ENCODE measurements at regions of chr6 and their contacts with region 1.

Region 1: DNA sequence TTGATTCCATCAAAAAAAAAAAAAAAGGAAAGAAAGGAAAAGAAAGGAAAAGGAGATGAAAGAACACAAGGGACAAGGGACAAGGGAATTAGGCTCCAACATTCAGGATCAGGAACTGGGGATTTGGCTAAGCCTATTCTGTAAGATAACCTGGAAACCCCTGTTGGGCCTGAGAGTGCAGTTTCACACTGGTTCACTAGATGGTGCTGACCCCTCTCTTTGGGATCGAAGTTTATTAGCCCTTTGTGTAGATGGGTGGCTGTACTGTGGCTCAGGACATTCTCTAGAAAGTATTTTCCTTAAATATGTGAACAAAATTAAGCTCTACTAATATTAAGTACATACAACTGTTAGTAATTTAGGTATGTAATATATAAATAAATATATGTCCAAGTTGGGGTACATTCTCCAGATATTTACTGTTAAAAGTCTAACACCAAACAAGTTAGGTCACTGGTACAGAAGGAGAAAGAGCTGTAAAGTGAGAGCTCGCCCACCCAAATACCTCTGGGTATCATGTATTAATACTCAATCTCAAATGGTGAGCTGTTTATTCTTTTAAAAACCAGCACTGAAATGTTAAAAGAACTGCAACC is 6.3 kb downstream of the OR2A4 start:
- DNase-seq: peak; percentile 33
- H3K4me3 Mint-ChIP-seq: no peak overlapping the region
- H3K27ac Mint-ChIP-seq: no peak overlapping the region
- H3K4me1 Mint-ChIP-seq: no peaks in the 10 kb centered on the region
- H3K27me3 Mint-ChIP-seq: no peaks in the 10 kb centered on the region

Region 2: DNA sequence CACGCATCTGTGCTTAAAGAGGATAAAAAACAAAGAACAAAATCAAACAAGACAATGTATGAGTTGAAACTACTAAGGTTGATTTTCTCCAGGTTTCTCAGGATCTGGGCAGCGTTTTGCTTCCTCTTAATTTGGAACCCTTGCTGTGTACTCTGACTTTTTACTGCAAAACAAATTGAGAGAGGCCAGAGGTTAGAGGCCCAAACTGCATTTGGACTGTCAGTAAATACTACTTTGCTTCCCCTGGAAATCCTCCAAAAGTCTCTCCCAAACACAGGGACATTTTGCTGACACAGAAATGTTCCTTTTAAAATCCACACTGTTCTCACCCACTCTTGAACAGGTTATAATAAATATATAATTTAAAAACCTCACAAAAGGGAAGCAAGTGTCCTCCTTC is 120.8 kb before region 1 on chr6:
- CTCF ChIA-PET with region 1: no interaction called
- POLR2A ChIA-PET with region 1: no interaction called
- DNase-seq: no peak
- H3K4me3 Mint-ChIP-seq: no peak overlapping the region
- H3K27ac Mint-ChIP-seq: no peak overlapping the region
- H3K4me1 Mint-ChIP-seq: no peaks in the 10 kb centered on the region
- H3K27me3 Mint-ChIP-seq: no peaks in the 10 kb centered on the region

Region 3: GRCh38 chr6:131831392-131831791 is 136.5 kb after region 1 on chr6:
- CTCF ChIA-PET with region 1: no interaction called
- POLR2A ChIA-PET with region 1: no interaction called
- DNase-seq: no peak
- H3K4me3 Mint-ChIP-seq: no peak overlapping the region
- H3K27ac Mint-ChIP-seq: no peak overlapping the region
- H3K4me1 Mint-ChIP-seq: no peaks in the 10 kb centered on the region
- H3K27me3 Mint-ChIP-seq: peaks cover 9% of the 10 kb centered on the region

Region 4: GRCh38 chr6:131909408-131910218 is 214.7 kb after region 1 on chr6:
- CTCF ChIA-PET with region 1: interaction called, 17 read pairs
- POLR2A ChIA-PET with region 1: no interaction called
- DNase-seq: peak; percentile 77
- H3K4me3 Mint-ChIP-seq: no peak overlapping the region
- H3K27ac Mint-ChIP-seq: no peak overlapping the region
- H3K4me1 Mint-ChIP-seq: peaks cover 13% of the 10 kb centered on the region
- H3K27me3 Mint-ChIP-seq: peaks cover 39% of the 10 kb centered on the region

Region 5: GRCh38 chr6:131914967-131915751 is 220.2 kb after region 1 on chr6:
- CTCF ChIA-PET with region 1: interaction called, 17 read pairs
- POLR2A ChIA-PET with region 1: no interaction called
- DNase-seq: peak; percentile 59
- H3K4me3 Mint-ChIP-seq: no peak overlapping the region
- H3K27ac Mint-ChIP-seq: no peak overlapping the region
- H3K4me1 Mint-ChIP-seq: peaks cover 22% of the 10 kb centered on the region
- H3K27me3 Mint-ChIP-seq: peaks cover 56% of the 10 kb centered on the region

Measured in activated CD4-positive, alpha-beta memory T cell treated with anti-CD3 and anti-CD28 coated beads, Interleukin-2, amount 10 ng/mL, durations not matched to agents 7 days and 5 days (primary cell).